HEK293 (cell line): ENCODE measurements at regions of chr2 and their contacts with region 1.

Region 1: DNA sequence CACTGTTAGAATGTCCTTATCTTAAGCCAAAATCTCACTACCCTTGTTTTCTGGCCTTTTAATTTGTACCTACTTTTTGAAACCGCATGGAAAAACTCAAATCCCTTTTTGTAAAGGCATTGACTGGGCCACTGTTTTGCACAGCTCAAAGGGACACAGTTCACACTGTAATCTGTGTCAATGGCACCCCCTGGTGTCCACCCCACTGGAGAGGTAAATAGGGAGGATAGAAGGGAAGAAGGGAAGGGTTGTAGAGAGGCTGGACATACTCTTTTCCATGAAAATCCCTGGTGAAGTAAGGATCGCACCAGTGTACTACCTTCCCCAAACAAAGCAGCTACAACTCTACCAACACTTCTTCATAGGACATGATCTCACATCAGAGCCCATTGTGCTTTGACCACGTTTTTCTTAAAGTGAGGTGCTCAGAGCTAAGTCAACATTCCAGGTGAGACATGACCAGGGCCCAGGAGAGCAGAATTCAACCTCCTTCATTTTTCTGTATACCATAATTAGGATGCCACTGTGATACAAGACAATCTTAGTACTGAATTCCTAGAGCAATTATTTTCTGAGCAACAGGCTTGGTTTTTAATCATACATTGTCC is 92.4 kb upstream of the RMDN2 start:
- H3K4me3 ChIP-seq: no peak overlapping the region
- H3K27ac ChIP-seq: no peak overlapping the region
- H3K4me1 ChIP-seq: peaks cover 8% of the 10 kb centered on the region
- CTCF ChIP-seq: peak; percentile 78

Region 2: DNA sequence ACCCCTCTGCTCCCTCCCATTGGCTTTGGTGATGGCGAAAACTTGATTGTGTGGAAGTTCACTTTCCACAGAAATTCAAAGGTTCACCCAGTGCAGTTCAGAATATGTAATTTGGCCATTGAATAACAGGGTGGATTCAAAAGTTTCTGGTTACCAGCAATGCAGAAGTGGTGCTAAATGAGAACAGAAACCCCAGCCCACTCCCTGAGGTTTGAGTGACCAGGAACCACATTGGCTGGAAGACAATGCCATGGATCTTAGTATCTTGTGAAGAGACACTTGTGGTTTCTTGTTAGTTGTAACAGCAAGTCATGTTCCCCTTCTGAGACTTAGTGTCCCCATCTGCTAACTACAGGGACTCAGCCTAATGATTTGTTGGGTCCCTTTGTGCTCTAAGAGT is 438.4 kb before region 1 on chr2:
- CTCF ChIA-PET with region 1: interaction called, 44 read pairs
- POLR2A ChIA-PET with region 1: no interaction called
- H3K4me3 ChIP-seq: no peak overlapping the region
- H3K27ac ChIP-seq: no peak overlapping the region
- H3K4me1 ChIP-seq: 0 out of 2 replicates have a peak, but pooled peaks cover 7% of the 10 kb centered on the region
- CTCF ChIP-seq: no peak

Region 3: GRCh38 chr2:37656512-37657423 is 175.9 kb before region 1 on chr2:
- CTCF ChIA-PET with region 1: interaction called, 12 read pairs
- POLR2A ChIA-PET with region 1: no interaction called
- H3K4me3 ChIP-seq: no peak overlapping the region
- H3K27ac ChIP-seq: 0 out of 2 replicates have a peak overlapping the region, but pooled peaks have one; percentile 7
- H3K4me1 ChIP-seq: peaks cover 30% of the 10 kb centered on the region
- CTCF ChIP-seq: no peak

Region 4: GRCh38 chr2:37672104-37672869 is 160.4 kb before region 1 on chr2:
- CTCF ChIA-PET with region 1: interaction called, 10 read pairs
- POLR2A ChIA-PET with region 1: interaction called, 6 read pairs
- H3K4me3 ChIP-seq: peak overlapping the region; percentile 93
- H3K27ac ChIP-seq: peak overlapping the region; percentile 87
- H3K4me1 ChIP-seq: 0 out of 2 replicates have a peak, but pooled peaks cover 2% of the 10 kb centered on the region
- CTCF ChIP-seq: no peak; the same call in 1 of the 2 replicates

Region 5: DNA sequence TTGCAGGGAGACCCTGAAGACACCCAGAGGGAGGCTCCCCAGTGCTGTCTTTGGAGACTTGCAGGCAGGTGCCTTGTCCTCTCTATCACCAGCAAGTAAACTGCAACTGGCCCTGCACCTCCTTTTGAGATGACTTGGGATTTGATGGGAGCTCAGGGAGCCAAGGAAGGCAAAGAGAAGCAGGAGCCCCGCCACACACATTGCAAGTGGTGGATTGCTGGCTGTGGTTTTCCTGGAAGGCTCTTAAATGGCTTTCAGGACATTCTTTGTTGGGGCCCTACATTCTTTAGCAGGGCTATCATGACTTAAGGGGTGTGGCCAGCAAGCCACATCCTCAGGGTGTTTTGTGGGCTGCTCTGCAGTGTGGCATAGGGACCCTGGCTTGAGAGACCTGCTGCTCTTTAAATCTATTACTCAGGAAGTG is 121.4 kb before region 1 on chr2:
- CTCF ChIA-PET with region 1: interaction called, 10 read pairs
- POLR2A ChIA-PET with region 1: no interaction called
- H3K4me3 ChIP-seq: no peak overlapping the region
- H3K27ac ChIP-seq: no peak overlapping the region
- H3K4me1 ChIP-seq: no peaks in the 10 kb centered on the region
- CTCF ChIP-seq: no peak

Region 6: GRCh38 chr2:37877457-37878315 is 45.0 kb after region 1 on chr2:
- CTCF ChIA-PET with region 1: interaction called, 48 read pairs
- POLR2A ChIA-PET with region 1: no interaction called
- H3K4me3 ChIP-seq: no peak overlapping the region
- H3K27ac ChIP-seq: no peak overlapping the region
- H3K4me1 ChIP-seq: no peaks in the 10 kb centered on the region
- CTCF ChIP-seq: peak; percentile 49